Calu3 (cell line): ENCODE measurements at regions of chr20 and their contacts with region 1.

Region 1: DNA sequence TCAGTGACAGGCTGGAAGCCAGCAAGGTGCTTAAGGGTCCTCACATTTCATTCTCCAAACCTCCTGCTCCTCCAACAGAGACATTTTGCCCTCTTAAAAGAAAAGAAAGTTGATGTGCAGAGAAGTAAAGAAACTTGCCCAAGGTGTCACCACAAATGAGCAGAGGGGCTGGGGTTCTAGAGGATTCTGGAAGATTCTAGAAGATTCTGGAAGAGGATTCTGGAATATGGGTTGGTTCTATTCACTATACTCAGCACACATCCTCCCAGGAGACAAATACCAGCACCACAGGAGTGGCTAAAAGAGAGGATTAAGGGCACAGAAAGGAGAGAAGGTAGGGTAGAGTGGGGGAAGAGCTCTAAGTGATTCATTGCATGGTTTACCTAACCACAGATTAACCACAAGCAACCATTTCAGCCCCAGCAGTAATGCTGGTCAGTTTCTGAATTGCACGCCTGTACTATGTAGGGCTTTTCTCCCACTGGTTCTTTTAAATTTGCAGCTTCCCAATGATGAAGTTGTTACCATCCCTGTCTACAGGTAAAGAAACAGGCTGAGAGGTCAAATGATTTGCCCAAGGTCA is 192.6 kb upstream of the PMEPA1 start:
- DNase-seq: peak; percentile 63
- H3K4me3 Mint-ChIP-seq: peak overlapping the region; percentile 11
- H3K27ac Mint-ChIP-seq: peak overlapping the region; percentile 76
- H3K4me1 Mint-ChIP-seq: peaks cover 77% of the 10 kb centered on the region
- H3K27me3 Mint-ChIP-seq: no peaks in the 10 kb centered on the region
- CTCF ChIP-seq: peak; percentile 40

Region 2: GRCh38 chr20:57698117-57698866 is 204.1 kb before region 1 on chr20:
- CTCF ChIA-PET with region 1: no interaction called
- intact Hi-C with region 1: loop called (anchors 5 kb)
- DNase-seq: peak; percentile 94
- H3K4me3 Mint-ChIP-seq: peak overlapping the region; percentile 88
- H3K27ac Mint-ChIP-seq: peak overlapping the region; percentile 97
- H3K4me1 Mint-ChIP-seq: peaks cover 92% of the 10 kb centered on the region
- H3K27me3 Mint-ChIP-seq: no peaks in the 10 kb centered on the region
- CTCF ChIP-seq: no peak

Region 3: DNA sequence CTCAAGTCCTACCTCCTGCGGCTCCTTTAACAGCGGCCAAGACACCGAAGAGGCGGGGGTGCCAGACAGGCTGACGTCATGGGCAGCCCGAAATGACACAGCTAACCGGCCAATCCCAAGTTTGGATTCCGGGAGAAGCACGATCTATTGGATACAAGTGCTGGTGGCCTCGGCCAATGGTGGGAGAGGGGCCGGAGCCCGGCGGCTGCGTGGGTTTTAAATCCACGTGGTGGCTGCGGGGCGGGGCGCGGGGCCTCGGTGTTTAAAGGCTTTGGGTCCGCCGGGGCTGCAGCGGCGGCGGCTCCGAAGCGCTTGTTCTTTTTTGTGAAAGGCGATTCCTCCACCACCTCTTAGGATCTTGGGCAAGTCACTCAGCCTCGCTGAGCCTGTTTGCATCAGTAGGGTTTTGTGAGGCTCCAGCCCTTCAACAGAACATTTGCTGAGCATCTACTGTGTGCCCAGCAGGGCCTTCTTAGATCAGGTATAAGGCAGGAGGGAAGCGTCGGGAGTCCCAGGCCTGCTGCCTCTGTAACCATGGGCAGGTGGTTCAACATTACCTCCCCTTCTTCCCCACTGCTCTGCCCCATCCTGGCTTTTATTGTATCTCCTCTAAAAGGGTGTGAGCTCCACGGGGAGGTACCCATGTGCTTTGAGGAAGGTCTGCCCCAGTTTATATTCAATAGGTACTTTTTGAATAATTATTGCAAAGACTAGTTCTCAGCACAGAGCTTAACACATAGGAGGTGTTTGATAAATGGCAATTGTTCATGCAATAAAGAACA is 183.7 kb before region 1 on chr20:
- CTCF ChIA-PET with region 1: interaction called, 4 read pairs
- intact Hi-C with region 1: loop called (anchors 2 kb)
- DNase-seq: peak; percentile 99
- H3K4me3 Mint-ChIP-seq: peak overlapping the region; percentile 76
- H3K27ac Mint-ChIP-seq: peak overlapping the region; percentile 92
- H3K4me1 Mint-ChIP-seq: peaks cover 52% of the 10 kb centered on the region
- H3K27me3 Mint-ChIP-seq: no peaks in the 10 kb centered on the region
- CTCF ChIP-seq: no peak

Region 4: GRCh38 chr20:57999465-58000111 is 97.2 kb after region 1 on chr20:
- CTCF ChIA-PET with region 1: interaction called, 4 read pairs
- intact Hi-C with region 1: loop called (anchors 5 kb)
- DNase-seq: peak; percentile 28
- H3K4me3 Mint-ChIP-seq: no peak overlapping the region
- H3K27ac Mint-ChIP-seq: peak overlapping the region; percentile 27
- H3K4me1 Mint-ChIP-seq: peaks cover 51% of the 10 kb centered on the region
- H3K27me3 Mint-ChIP-seq: no peaks in the 10 kb centered on the region
- CTCF ChIP-seq: no peak

Region 5: DNA sequence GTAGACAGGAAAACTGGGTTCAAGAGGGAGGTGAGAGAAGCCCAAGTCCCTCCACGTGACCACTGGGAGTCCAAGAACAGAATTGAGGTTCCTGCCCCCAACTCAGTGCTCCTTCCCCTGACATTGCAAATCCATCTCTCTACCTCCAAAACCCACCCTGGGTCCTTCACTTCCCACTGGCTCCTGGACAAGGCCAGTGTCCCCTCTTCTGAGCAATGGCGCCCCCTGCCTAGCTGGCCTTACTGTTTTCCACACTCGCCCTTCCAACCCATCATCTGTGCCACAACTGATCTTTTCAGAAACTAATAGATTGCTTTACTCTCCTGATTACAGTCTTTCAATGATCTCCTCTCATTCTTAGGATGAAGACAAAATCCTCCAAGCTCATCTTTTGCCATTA is 125.7 kb after region 1 on chr20:
- CTCF ChIA-PET with region 1: no interaction called
- intact Hi-C with region 1: no loop called
- DNase-seq: no peak
- H3K4me3 Mint-ChIP-seq: no peak overlapping the region
- H3K27ac Mint-ChIP-seq: no peak overlapping the region
- H3K4me1 Mint-ChIP-seq: peaks cover 33% of the 10 kb centered on the region
- H3K27me3 Mint-ChIP-seq: no peaks in the 10 kb centered on the region
- CTCF ChIP-seq: peak; percentile 29

Region 6: DNA sequence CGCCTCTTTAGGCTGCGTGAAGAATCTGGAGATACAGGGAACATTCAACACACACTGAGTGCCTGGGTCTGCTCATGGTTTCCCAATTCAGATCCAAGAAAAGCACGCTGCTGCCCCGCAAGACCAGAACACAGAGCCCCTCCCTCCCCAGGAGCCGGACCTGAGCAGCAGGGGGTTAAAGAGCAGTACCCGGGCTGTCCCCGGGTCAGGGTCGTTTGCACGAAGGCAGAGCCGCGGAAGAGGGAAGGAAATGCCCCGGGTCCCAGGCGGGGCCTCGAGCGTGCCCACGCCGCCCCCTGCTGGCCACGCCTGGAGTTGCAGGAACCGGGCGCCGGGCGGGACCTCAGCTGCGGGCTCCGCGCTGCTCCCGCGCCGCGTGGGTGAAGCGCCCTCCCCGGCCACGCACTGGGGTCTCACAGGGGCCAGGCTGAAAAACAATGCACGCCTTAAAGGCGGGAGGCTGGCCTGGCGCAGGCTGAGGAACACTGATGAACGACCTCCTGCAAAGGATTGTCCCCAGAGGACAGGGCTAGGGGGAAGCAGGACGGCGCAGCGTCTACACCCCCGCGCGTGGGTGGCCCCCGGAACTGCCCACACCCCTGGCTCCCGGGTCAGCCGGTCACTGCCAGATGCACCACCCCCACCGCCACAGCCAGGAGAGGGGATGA is 277.2 kb after region 1 on chr20:
- CTCF ChIA-PET with region 1: interaction called, 3 read pairs
- intact Hi-C with region 1: loop called (anchors 10 kb)
- DNase-seq: peak; percentile 92
- H3K4me3 Mint-ChIP-seq: peak overlapping the region; percentile 68
- H3K27ac Mint-ChIP-seq: peak overlapping the region; percentile 91
- H3K4me1 Mint-ChIP-seq: peaks cover 35% of the 10 kb centered on the region
- H3K27me3 Mint-ChIP-seq: no peaks in the 10 kb centered on the region
- CTCF ChIP-seq: peak; percentile 100